Activated B cell treated with CpG ODN at 0.5 μM for 24 hours (primary cell): ENCODE measurements at regions of chr3 and their contacts with region 1.

Region 1: DNA sequence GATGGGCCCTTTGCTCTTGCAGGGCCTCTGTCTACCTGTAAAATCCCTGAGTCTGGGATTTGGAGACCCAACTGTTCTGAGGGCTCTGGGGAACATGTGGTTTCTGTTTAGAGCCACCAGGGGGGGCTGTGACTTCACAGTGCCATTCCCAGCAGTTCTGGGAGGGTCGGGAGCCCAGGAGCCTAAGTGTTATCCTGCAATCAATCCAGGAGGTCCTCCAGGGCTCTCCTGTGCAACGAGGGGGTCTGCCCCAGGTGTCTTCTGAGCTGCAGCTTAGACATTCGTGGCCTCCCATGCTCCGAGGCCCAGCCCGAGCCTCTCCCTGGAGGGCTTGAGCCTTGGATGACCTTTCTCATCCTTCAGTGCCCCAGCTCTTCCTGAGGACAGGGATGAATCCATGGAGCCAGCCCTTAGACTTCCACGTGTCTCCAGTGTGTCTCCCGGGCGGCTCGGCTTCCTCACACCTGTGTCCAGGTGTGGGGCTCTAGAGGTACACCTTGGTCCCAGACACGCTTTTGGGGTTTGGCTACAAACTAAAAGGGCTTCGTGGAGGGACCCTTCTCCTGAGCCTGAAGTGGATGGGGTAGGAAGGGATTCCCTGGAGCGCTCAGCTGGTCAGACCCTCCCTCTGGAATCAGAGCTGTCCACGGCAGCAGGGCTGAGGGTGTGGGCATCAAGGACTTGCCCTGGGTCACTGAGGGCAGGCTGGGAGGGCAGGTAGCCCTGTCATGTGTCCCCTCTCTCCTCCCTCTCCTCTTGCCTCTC is 20.3 kb upstream of the ABTB1 start:
- DNase-seq: no peak
- ATAC-seq: peak; percentile 76
- H3K4me3 Mint-ChIP-seq: no peak overlapping the region
- H3K27ac Mint-ChIP-seq: no peak overlapping the region
- H3K4me1 Mint-ChIP-seq: no peaks in the 10 kb centered on the region
- H3K27me3 Mint-ChIP-seq: no peaks in the 10 kb centered on the region
- CTCF ChIP-seq: peak; percentile 5

Region 2: DNA sequence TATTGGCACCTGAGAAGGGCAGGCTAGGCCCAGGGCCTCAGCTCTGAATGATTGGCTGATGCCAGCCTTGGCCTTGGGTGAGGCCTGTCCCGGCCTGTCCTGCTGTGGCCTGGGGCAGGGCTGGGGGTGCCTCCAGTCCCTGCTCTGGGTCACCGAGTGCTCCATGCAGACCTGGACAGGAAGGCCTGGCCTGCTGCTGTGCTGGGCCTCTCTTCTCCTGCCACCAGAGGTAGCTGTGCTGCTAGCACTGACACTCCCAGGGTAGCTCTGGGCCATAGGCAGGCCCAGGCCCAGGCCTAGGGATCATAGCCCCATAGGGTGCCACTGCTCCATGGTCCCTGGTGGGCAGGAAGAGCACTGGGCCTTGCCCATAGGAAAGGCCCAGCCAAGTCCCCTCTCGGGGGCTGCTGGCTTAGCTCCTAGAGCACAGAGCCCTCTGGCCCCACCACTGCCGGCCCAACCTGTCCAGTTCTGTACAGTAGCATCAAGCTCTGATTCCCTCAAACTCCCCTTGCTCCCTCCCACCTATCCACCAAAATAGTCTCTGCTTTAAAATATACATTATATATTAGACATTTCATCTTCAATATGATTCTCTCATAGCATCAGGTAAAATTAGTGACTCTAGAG is 38.5 kb after region 1 on chr3:
- CTCF ChIA-PET with region 1: interaction called, 12 read pairs
- POLR2A ChIA-PET with region 1: interaction called, 3 read pairs
- intact Hi-C with region 1: loop called (anchors 2 kb)
- DNase-seq: no peak
- ATAC-seq: peak; percentile 69
- H3K4me3 Mint-ChIP-seq: no peak overlapping the region
- H3K27ac Mint-ChIP-seq: no peak overlapping the region
- H3K4me1 Mint-ChIP-seq: peaks cover 23% of the 10 kb centered on the region
- H3K27me3 Mint-ChIP-seq: peaks cover 2% of the 10 kb centered on the region
- CTCF ChIP-seq: no peak

Region 3: GRCh38 chr3:127831723-127832172 is 179.3 kb after region 1 on chr3:
- CTCF ChIA-PET with region 1: interaction called, 7 read pairs
- POLR2A ChIA-PET with region 1: no interaction called
- intact Hi-C with region 1: loop called (anchors 1 kb)
- DNase-seq: peak; percentile 32
- ATAC-seq: no peak
- H3K4me3 Mint-ChIP-seq: no peak overlapping the region
- H3K27ac Mint-ChIP-seq: no peak overlapping the region
- H3K4me1 Mint-ChIP-seq: peaks cover 40% of the 10 kb centered on the region
- H3K27me3 Mint-ChIP-seq: no peaks in the 10 kb centered on the region
- CTCF ChIP-seq: no peak

Region 4: DNA sequence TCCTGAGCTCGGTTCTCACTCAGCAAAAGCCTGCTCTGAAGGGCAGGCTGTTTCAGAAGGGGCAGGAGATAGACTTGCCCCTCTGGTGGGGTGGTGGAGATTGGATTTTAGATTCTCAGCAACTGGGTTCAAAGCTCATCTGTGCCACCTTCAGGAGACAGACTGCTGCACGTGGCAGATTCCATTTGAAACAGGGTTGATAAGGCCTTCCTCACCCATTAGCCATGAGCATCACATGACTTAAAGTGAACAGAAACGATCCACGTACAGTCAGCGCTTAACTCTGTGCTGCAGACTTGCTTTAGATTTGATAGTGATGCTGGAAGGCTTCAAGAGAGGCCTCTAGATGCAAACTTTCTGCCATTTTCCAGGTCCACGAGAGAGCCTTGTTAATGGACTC is 204.9 kb after region 1 on chr3:
- CTCF ChIA-PET with region 1: interaction called, 4 read pairs
- POLR2A ChIA-PET with region 1: no interaction called
- intact Hi-C with region 1: loop called (anchors 1 kb)
- DNase-seq: no peak
- ATAC-seq: peak; percentile 64
- H3K4me3 Mint-ChIP-seq: no peak overlapping the region
- H3K27ac Mint-ChIP-seq: no peak overlapping the region
- H3K4me1 Mint-ChIP-seq: no peaks in the 10 kb centered on the region
- H3K27me3 Mint-ChIP-seq: no peaks in the 10 kb centered on the region
- CTCF ChIP-seq: no peak

Region 5: GRCh38 chr3:127959846-127960245 is 307.4 kb after region 1 on chr3:
- CTCF ChIA-PET with region 1: interaction called, 10 read pairs
- POLR2A ChIA-PET with region 1: no interaction called
- intact Hi-C with region 1: loop called (anchors 1 kb)
- DNase-seq: no peak
- ATAC-seq: no peak
- H3K4me3 Mint-ChIP-seq: no peak overlapping the region
- H3K27ac Mint-ChIP-seq: no peak overlapping the region
- H3K4me1 Mint-ChIP-seq: no peaks in the 10 kb centered on the region
- H3K27me3 Mint-ChIP-seq: no peaks in the 10 kb centered on the region
- CTCF ChIP-seq: no peak

Region 6: GRCh38 chr3:127970966-127971592 is 318.7 kb after region 1 on chr3:
- CTCF ChIA-PET with region 1: interaction called, 46 read pairs
- POLR2A ChIA-PET with region 1: no interaction called
- intact Hi-C with region 1: loop called (anchors 1 kb)
- DNase-seq: no peak
- ATAC-seq: peak; percentile 67
- H3K4me3 Mint-ChIP-seq: no peak overlapping the region
- H3K27ac Mint-ChIP-seq: no peak overlapping the region
- H3K4me1 Mint-ChIP-seq: no peaks in the 10 kb centered on the region
- H3K27me3 Mint-ChIP-seq: peaks cover 5% of the 10 kb centered on the region
- CTCF ChIP-seq: peak; percentile 30

Region 7: GRCh38 chr3:128133273-128134084 is 481.1 kb after region 1 on chr3:
- CTCF ChIA-PET with region 1: interaction called, 3 read pairs
- POLR2A ChIA-PET with region 1: no interaction called
- intact Hi-C with region 1: loop called (anchors 2 kb)
- DNase-seq: no peak
- ATAC-seq: no peak
- H3K4me3 Mint-ChIP-seq: no peak overlapping the region
- H3K27ac Mint-ChIP-seq: no peak overlapping the region
- H3K4me1 Mint-ChIP-seq: no peaks in the 10 kb centered on the region
- H3K27me3 Mint-ChIP-seq: peaks cover 7% of the 10 kb centered on the region
- CTCF ChIP-seq: no peak